Activated CD8-positive, alpha-beta T cell treated with anti-CD3 and anti-CD28 coated beads for 36 hours (primary cell): ENCODE measurements at regions of chr7 and their contacts with region 1.

Region 1: DNA sequence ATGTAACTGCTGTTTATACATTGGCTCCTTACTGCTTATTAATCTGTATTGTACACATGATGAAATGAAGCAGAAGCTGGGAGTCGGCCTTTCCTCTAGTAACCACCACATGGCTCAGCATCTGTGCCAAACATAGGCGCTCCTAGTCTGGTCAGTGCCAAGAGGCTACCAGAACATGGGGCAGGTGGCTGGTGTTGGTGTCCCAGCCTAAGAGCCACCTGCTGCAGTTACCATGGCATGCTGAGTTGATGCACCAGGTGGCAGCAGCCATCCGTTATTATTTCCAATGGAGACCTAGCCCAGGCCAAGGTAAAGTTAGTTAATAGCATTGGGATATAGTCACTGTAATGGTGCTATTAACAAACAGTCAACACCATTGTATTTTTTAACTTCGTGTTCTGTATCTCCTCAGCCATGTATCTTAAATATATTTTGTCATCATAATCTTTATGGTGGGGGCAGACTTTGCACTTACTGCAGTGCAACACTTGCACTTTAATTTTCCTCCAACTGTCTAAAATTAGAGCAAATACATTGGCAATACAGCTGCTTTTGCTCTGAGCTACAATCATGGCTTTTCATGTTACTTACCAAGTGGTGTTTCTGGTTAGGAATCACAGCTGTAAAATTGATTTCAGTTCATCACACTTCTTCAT is 33.1 kb downstream of the HBP1 start:
- DNase-seq: peak; percentile 55
- ATAC-seq: peak; percentile 74
- H3K4me3 Mint-ChIP-seq: no peak overlapping the region
- H3K27ac Mint-ChIP-seq: no peak overlapping the region
- H3K4me1 Mint-ChIP-seq: no peaks in the 10 kb centered on the region
- H3K27me3 Mint-ChIP-seq: no peaks in the 10 kb centered on the region
- CTCF ChIP-seq: peak; percentile 43

Region 2: GRCh38 chr7:107187774-107188173 is 14.1 kb before region 1 on chr7:
- CTCF ChIA-PET with region 1: interaction called, 10 read pairs
- POLR2A ChIA-PET with region 1: no interaction called
- intact Hi-C with region 1: no loop called
- DNase-seq: no peak
- ATAC-seq: no peak
- H3K4me3 Mint-ChIP-seq: no peak overlapping the region
- H3K27ac Mint-ChIP-seq: peak overlapping the region; percentile 46
- H3K4me1 Mint-ChIP-seq: peaks cover 10% of the 10 kb centered on the region
- H3K27me3 Mint-ChIP-seq: no peaks in the 10 kb centered on the region
- CTCF ChIP-seq: no peak